Stomach (tissue), 19 donors: ENCODE measurements at regions of chr3 and their contacts with region 1.

Region 1: GRCh38 chr3:181700168-181701087 is 11.3 kb upstream of the SOX2 start:
- DNase-seq: peak; percentile 77 to 95
- H3K4me3 ChIP-seq: peak overlapping the region in 3 of 4 donors; percentile 16 to 31 (median 16)
- H3K27ac ChIP-seq: peak overlapping the region in 1 of 5 donors; percentile 25
- H3K4me1 ChIP-seq: peaks cover 14 to 54% (median 32%) of the 10 kb centered on the region in 4 donors
- H3K27me3 ChIP-seq: peaks cover 23 to 100% (median 87%) of the 10 kb centered on the region in 3 donors
- CTCF ChIP-seq: peak in 5 of 7 experiments; percentile 33 to 82 (median 77)
- EP300 ChIP-seq: no peak
- POLR2A ChIP-seq: no peak

Region 2: GRCh38 chr3:181541414-181541813 is 159.0 kb before region 1 on chr3:
- intact Hi-C with region 1: no loop called
- DNase-seq: no peak
- H3K4me3 ChIP-seq: no peak overlapping the region
- H3K27ac ChIP-seq: no peak overlapping the region
- H3K4me1 ChIP-seq: no peaks in the 10 kb centered on the region
- H3K27me3 ChIP-seq: no peaks in the 10 kb centered on the region
- CTCF ChIP-seq: no peak
- EP300 ChIP-seq: no peak
- POLR2A ChIP-seq: no peak

Region 3: GRCh38 chr3:182618085-182618732 is 917.8 kb after region 1 on chr3:
- intact Hi-C with region 1: loop called (anchors 10 kb)
- DNase-seq: peak in 1 of 2 donors; percentile 71
- H3K4me3 ChIP-seq: no peak overlapping the region
- H3K27ac ChIP-seq: no peak overlapping the region
- H3K4me1 ChIP-seq: peaks cover 0 to 10% (median 0%) of the 10 kb centered on the region in 4 donors
- H3K27me3 ChIP-seq: no peaks in the 10 kb centered on the region
- CTCF ChIP-seq: peak in 4 of 7 experiments; percentile 7 to 55 (median 32)
- EP300 ChIP-seq: no peak
- POLR2A ChIP-seq: no peak